ENCODE measurements at regions of chrX and their contacts with region 1.

Region 1: GRCh38 chrX:149527705-149528104 is 13.1 kb upstream of the EOLA1 start:
- DNase-seq: peak; percentile 54
- ATAC-seq: peak; percentile 25
- H3K4me3 Mint-ChIP-seq: no peak overlapping the region
- H3K27ac Mint-ChIP-seq: peak overlapping the region; percentile 69
- H3K4me1 Mint-ChIP-seq: peaks cover 37% of the 10 kb centered on the region
- H3K27me3 Mint-ChIP-seq: no peaks in the 10 kb centered on the region

Region 2: GRCh38 chrX:149512225-149512885 is 15.3 kb before region 1 on chrX:
- CTCF ChIA-PET with region 1: interaction called, 33 read pairs
- DNase-seq: peak; percentile 70
- ATAC-seq: peak; percentile 65
- H3K4me3 Mint-ChIP-seq: no peak overlapping the region
- H3K27ac Mint-ChIP-seq: peak overlapping the region; percentile 85
- H3K4me1 Mint-ChIP-seq: peaks cover 57% of the 10 kb centered on the region
- H3K27me3 Mint-ChIP-seq: no peaks in the 10 kb centered on the region